ENCODE measurements at regions of chr1 and their contacts with region 1.

Region 1: DNA sequence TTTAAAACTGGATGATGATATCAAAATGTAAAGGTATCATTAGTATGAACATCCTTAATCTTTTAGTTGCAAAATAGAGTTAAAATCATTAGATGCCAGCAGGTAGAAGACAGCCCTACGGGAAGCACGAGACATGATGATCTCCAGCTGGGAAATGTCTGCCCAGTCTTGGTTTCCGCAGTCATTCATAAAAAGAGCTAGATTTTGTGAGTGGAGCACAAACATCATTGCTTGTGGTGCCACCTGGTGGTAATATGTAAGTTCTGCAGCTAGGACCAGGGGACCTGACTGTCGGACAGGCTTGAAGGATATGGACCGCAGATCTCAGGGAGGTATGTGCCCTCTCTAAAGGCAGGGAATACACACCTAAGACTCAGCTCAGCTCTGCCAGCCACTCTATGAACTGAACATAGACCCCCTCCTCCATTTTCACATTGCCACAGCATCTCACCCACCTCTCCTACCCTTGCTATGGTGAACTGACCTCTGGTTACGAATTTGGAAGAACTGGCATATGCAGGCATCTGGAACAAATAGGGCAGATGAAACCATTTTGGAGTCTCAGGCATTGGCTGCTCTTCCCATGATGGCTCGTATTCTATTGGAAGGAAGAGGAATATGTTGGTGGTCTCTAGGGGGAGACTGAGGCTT is 9.2 kb downstream of the FCMR start:
- DNase-seq: peak; percentile 52 to 70
- ATAC-seq: peak in 3 of 4 donors; percentile 46 to 77 (median 69)
- H3K4me3 ChIP-seq: no peak overlapping the region
- H3K27ac ChIP-seq: no peak overlapping the region
- H3K4me1 ChIP-seq: peaks cover 3% of the 10 kb centered on the region
- H3K27me3 ChIP-seq: peaks cover 0 to 4% (median 0%) of the 10 kb centered on the region in 3 donors
- CTCF ChIP-seq: peak; percentile 87

Region 2: GRCh38 chr1:206635080-206635977 is 277.2 kb before region 1 on chr1 and contains the start of gene DYRK3:
- intact Hi-C with region 1: loop called (anchors 2 to 5 kb)
- DNase-seq: peak; percentile 95 to 97
- ATAC-seq: peak; percentile 97 to 99 (median 98)
- H3K4me3 ChIP-seq: peak within 1 kb of the TSS; percentile 97
- H3K27ac ChIP-seq: peak within 1 kb of the TSS; percentile 73
- H3K4me1 ChIP-seq: peaks cover 18% of the 10 kb centered on the region
- H3K27me3 ChIP-seq: no peaks in the 10 kb centered on the region
- CTCF ChIP-seq: peak; percentile 21
- total RNA-seq, gene DYRK3: 0.57 to 2.0 (median 1.4) TPM

Region 3: DNA sequence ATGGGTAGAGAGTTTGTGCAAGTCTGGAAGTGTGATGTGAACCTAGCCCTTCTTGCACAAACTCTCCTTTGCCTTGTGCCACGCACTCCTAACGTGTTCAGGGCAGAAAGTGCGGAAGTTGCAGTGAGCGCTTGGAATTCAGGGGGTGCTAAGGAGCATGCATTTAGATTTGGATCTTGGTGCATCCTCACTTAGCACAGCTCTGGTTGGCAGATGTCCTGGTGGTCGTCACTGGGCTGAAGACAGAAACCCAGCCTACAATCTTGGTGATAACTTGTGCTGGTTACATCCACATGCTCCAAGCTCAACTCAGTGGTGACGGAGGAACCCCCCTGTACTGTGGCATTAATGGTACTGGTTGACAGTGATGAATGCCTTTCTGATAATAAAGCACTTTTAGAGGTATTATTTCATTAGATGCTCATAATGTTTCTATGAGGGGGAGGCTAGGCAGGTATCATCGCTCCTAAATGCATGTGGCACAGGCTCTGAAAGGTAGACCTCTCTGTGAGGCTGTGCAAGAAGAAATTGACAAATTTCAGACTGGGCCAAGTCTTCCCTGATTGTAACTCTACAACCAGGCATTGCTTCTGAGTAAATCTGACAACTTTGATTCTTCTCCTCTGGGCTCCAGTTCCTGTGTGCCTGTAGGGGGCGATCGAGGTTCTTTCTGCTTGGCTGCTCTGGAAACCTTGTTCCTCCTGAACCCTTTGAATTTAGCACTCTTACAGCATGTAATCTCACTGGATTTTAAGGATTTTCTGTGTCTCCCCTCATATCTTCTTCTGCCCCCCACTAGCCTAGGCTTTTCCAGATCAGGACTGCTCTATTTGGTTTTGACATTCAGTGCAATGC is 187.2 kb before region 1 on chr1:
- intact Hi-C with region 1: loop called in 1 of 2 experiments (anchors 2 kb)
- DNase-seq: no peak
- ATAC-seq: no peak
- H3K4me3 ChIP-seq: no peak overlapping the region
- H3K27ac ChIP-seq: peak overlapping the region; percentile 87
- H3K4me1 ChIP-seq: peaks cover 70% of the 10 kb centered on the region
- H3K27me3 ChIP-seq: no peaks in the 10 kb centered on the region
- CTCF ChIP-seq: peak; percentile 47

Region 4: GRCh38 chr1:206808615-206809014 is 104.0 kb before region 1 on chr1:
- intact Hi-C with region 1: loop called in 1 of 2 experiments (anchors 5 kb)
- DNase-seq: no peak
- ATAC-seq: peak; percentile 49 to 86 (median 76)
- H3K4me3 ChIP-seq: no peak overlapping the region
- H3K27ac ChIP-seq: no peak overlapping the region
- H3K4me1 ChIP-seq: no peaks in the 10 kb centered on the region
- H3K27me3 ChIP-seq: no peaks in the 10 kb centered on the region
- CTCF ChIP-seq: peak; percentile 51

Region 5: GRCh38 chr1:206875752-206876380 is 36.7 kb before region 1 on chr1:
- intact Hi-C with region 1: no loop called
- DNase-seq: no peak
- ATAC-seq: no peak
- H3K4me3 ChIP-seq: no peak overlapping the region
- H3K27ac ChIP-seq: no peak overlapping the region
- H3K4me1 ChIP-seq: no peaks in the 10 kb centered on the region
- H3K27me3 ChIP-seq: no peaks in the 10 kb centered on the region
- CTCF ChIP-seq: no peak

Region 6: DNA sequence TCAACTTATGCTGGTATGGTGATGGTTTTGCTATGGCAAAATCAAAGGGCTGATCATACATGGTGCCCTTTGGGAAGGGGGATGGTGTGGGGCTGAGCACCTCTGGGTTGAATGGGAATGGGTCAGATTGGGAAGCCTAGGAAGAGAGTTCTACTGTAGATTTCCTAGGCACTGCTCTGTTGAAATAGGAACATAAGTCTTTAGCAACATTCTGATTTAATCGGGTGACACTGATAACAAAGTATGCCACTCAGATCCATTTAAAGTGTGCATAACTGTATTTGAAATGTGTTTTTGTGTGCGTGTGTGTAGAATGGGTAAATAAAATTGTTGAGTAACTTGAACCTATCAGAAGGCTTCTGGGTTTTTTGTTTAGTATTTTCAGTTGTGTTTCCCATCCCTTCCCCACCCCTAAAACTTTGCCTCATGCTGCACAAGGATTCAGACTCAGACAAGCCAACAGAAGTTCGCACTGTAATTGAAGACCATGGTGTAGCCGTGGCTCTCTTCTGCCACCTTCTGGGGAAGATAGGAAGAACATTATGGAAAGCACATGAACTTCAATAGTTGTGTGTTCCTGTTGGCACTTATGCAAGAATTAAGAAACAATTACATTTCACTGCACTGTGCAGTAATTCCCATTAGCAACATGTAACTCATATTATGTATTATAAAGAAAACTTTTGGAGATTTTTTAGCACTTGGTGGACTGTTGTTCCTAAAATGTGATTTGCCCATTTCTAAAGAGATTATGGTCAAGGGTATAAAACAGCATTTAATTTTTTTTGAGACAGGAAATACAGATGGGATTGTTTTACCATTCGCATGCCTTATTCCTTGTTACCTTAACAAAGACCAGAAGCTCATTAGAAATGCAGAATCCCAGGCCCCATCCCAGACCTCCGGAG is 165.2 kb after region 1 on chr1:
- intact Hi-C with region 1: loop called in 1 of 2 experiments (anchors 5 kb)
- DNase-seq: no peak
- ATAC-seq: peak; percentile 72 to 91 (median 84)
- H3K4me3 ChIP-seq: no peak overlapping the region
- H3K27ac ChIP-seq: peak overlapping the region; percentile 24
- H3K4me1 ChIP-seq: peaks cover 4% of the 10 kb centered on the region
- H3K27me3 ChIP-seq: no peaks in the 10 kb centered on the region
- CTCF ChIP-seq: peak; percentile 90

Region 7: DNA sequence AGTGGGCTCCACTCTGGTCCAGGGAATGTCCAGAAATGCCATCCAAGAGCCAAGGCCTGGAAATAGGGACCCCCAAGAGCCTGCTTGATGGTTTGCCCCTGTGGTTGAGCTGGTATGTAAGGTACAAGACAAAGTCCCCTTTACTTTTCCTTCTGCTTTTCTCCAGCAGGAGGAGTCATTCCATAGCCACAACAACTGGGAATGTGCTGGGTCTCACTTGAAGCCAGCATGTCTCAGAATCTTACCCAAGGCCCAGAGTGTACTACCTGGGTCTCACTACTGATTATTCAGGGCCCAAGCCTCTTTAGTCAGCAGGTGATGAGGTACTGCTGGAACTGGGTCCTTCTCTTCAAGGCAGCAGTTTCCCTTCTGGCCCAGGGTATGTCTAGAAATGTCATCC is 346.8 kb after region 1 on chr1:
- intact Hi-C with region 1: no loop called
- DNase-seq: no peak
- ATAC-seq: peak in 2 of 4 donors; percentile 44 to 60
- H3K4me3 ChIP-seq: no peak overlapping the region
- H3K27ac ChIP-seq: no peak overlapping the region
- H3K4me1 ChIP-seq: no peaks in the 10 kb centered on the region
- H3K27me3 ChIP-seq: no peaks in the 10 kb centered on the region
- CTCF ChIP-seq: peak; percentile 33